Activated CD4-positive, alpha-beta T cell treated with anti-CD3 and anti-CD28 coated beads for 36 hours (primary cell): ENCODE measurements at regions of chr12 and their contacts with region 1.

Region 1: DNA sequence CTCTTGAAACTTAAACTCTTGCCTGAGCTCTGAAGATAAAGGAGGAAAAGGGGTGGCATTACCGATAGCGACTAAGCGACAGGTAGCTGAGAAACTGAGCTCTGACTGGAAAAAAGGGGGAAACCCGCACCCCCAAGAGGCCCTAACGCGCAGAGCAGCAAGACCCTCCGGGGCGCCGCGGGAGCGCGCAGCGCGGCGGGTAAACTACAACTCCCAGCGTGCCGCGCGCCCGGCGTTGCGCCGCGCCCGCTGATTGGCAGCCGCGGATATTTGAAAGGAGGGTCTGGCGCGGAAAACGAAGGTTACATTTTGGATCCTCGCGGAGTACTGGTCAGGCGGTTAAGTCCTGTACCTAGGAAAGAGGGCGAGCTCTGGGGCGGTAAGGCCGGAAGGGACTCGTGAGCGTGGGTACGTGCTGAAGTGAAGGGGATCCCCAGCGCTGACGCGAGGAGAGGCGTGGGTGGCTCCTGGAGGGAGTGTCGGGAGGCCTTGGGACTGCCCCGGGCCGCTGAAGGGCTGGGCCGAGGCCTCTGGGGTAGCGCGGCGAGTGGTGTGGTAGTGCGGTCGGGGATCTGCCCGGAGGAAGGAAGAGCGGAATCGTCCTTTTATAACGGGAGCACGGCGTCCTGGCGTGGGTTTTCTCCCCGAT is at the start of gene ESPL1:
- DNase-seq: peak; percentile 93
- ATAC-seq: peak; percentile 86
- H3K4me3 Mint-ChIP-seq: peak within 1 kb of the TSS; percentile 92
- H3K27ac Mint-ChIP-seq: peak within 1 kb of the TSS; percentile 98
- H3K4me1 Mint-ChIP-seq: peaks cover 30% of the 10 kb centered on the region
- H3K27me3 Mint-ChIP-seq: no peaks in the 10 kb centered on the region
- total RNA-seq, gene ESPL1: 60.8 to 66.9 TPM

Region 2: DNA sequence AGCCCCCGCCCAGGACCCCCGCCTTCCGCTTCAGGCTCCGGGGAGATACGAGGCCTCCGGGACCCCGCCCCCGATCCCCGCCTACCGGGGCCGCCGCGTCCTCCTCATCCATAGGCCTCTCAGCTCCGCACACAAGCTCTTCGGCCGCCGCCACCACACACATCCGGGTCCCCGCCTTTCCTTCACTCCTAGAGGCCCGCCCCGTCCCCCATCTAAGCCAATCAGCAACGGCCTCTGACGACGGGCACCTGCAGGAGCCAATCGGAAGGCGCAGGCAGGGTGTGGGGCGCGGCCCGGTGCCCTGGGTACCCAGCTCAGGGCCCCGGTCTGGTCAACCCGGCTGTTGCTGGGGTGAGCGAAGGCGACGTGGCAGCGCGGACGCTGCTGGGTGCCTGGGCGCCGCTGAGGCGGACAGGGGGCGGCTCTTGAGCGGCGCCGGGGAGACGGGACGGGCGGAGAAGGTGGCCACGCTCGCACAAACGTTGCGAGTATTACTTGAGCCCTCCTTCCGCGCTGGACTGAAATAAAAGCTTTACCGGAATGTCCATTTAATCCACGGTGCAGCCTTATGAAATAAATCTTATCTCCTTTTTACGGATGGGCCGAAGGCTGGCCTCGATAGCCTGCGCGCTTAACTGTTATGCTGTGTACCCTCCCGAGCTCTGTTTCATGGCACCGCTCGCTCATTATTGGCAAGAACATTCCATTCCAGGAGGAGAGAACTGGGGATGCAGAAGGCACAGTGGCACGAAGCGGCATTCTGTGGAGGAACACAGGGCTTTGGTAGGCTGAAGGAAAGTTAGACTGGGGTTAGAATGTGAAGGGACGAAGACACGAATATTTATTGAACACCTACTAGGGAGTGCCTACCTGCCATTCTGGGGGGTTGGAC is 188.7 kb before region 1 on chr12 and contains the start of gene SPRYD3:
- CTCF ChIA-PET with region 1: interaction called, 5 read pairs
- POLR2A ChIA-PET with region 1: no interaction called
- intact Hi-C with region 1: loop called in 1 of 2 experiments (anchors 1 kb)
- DNase-seq: peak; percentile 98
- ATAC-seq: peak; percentile 98
- H3K4me3 Mint-ChIP-seq: peak within 1 kb of the TSS; percentile 80
- H3K27ac Mint-ChIP-seq: peak within 1 kb of the TSS; percentile 74
- H3K4me1 Mint-ChIP-seq: peaks cover 33% of the 10 kb centered on the region
- H3K27me3 Mint-ChIP-seq: no peaks in the 10 kb centered on the region
- total RNA-seq, gene SPRYD3: 13.7 to 18.2 TPM

Region 3: GRCh38 chr12:53213348-53213747 is 54.8 kb before region 1 on chr12:
- CTCF ChIA-PET with region 1: interaction called, 113 read pairs
- POLR2A ChIA-PET with region 1: interaction called, 6 read pairs
- intact Hi-C with region 1: loop called in 1 of 2 experiments (anchors 1 kb)
- DNase-seq: peak; percentile 92
- ATAC-seq: peak; percentile 70
- H3K4me3 Mint-ChIP-seq: no peak overlapping the region
- H3K27ac Mint-ChIP-seq: no peak overlapping the region
- H3K4me1 Mint-ChIP-seq: peaks cover 62% of the 10 kb centered on the region
- H3K27me3 Mint-ChIP-seq: no peaks in the 10 kb centered on the region

Region 4: GRCh38 chr12:53295070-53295890 is 27.2 kb after region 1 on chr12 and contains the start of gene PFDN5:
- CTCF ChIA-PET with region 1: interaction called, 28 read pairs
- POLR2A ChIA-PET with region 1: interaction called, 5 read pairs
- intact Hi-C with region 1: loop called (anchors 1 to 2 kb)
- DNase-seq: peak; percentile 93
- ATAC-seq: peak; percentile 88
- H3K4me3 Mint-ChIP-seq: peak within 1 kb of the TSS; percentile 85
- H3K27ac Mint-ChIP-seq: peak within 1 kb of the TSS; percentile 94
- H3K4me1 Mint-ChIP-seq: peaks cover 52% of the 10 kb centered on the region
- H3K27me3 Mint-ChIP-seq: no peaks in the 10 kb centered on the region
- total RNA-seq, gene PFDN5: 253 to 322 TPM

Region 5: DNA sequence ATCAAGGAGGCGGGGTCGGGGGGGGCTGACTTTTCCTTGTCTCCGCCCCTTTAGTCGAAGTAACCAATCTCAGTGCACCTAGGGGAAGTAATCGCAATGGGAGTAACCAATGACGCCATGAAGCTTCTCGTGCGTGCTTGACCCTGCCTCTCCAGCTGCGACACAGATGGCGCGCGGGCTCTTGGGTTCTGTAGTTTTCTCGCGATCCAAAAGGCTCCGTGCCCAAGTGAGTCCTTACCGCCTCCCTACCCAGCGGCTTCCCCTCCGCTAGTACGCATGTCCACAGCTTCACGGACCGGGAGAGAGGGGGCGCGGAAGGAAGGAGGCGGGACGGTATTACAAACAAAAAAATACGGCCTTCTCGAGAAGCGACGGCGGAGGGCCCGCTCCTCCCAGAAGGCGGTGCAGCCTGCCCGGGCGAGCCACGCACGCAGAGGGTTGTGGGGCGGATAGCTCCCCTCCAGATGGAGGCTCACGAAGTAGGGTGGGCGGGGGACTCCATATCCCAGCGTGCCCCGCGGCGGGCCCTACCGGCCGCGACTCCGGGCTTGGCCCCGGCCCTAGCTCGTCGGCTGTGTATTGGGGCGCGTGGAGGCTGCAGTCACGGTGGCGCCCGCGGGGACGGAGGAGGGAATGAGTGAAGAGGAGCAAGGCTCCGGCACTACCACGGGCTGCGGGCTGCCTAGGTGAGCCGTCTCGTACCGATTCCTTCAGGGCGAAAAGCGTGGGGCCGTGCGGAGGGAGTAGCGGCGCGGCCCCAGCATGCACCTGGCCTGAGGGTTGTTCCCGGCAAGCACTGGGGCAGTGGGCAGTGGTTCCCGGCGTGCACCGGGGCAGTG is 232.9 kb after region 1 on chr12 and contains the start of gene TARBP2:
- CTCF ChIA-PET with region 1: interaction called, 3 read pairs
- POLR2A ChIA-PET with region 1: interaction called, 4 read pairs
- intact Hi-C with region 1: loop called in 1 of 2 experiments (anchors 1 kb)
- DNase-seq: peak; percentile 98
- ATAC-seq: peak; percentile 84
- H3K4me3 Mint-ChIP-seq: peak within 1 kb of the TSS; percentile 81
- H3K27ac Mint-ChIP-seq: peak within 1 kb of the TSS; percentile 98
- H3K4me1 Mint-ChIP-seq: peaks cover 31% of the 10 kb centered on the region
- H3K27me3 Mint-ChIP-seq: no peaks in the 10 kb centered on the region
- total RNA-seq, gene TARBP2: 28.3 to 30.2 TPM